PC-3 (cell line): ENCODE measurements at regions of chr1 and their contacts with region 1.

Region 1: GRCh38 chr1:1399187-1399871 is at the start of gene CCNL2:
- DNase-seq: peak; percentile 100
- ATAC-seq: peak; percentile 86
- H3K4me3 ChIP-seq: peak within 1 kb of the TSS; percentile 94
- H3K27ac ChIP-seq: peak within 1 kb of the TSS; percentile 58
- H3K4me1 ChIP-seq: peaks cover 29% of the 10 kb centered on the region
- H3K27me3 ChIP-seq: no peaks in the 10 kb centered on the region
- CTCF ChIP-seq: peak; percentile 54; the same call in 1 of the 2 replicates
- total RNA-seq, gene CCNL2: 356 and 385 TPM in 2 replicates

Region 2: DNA sequence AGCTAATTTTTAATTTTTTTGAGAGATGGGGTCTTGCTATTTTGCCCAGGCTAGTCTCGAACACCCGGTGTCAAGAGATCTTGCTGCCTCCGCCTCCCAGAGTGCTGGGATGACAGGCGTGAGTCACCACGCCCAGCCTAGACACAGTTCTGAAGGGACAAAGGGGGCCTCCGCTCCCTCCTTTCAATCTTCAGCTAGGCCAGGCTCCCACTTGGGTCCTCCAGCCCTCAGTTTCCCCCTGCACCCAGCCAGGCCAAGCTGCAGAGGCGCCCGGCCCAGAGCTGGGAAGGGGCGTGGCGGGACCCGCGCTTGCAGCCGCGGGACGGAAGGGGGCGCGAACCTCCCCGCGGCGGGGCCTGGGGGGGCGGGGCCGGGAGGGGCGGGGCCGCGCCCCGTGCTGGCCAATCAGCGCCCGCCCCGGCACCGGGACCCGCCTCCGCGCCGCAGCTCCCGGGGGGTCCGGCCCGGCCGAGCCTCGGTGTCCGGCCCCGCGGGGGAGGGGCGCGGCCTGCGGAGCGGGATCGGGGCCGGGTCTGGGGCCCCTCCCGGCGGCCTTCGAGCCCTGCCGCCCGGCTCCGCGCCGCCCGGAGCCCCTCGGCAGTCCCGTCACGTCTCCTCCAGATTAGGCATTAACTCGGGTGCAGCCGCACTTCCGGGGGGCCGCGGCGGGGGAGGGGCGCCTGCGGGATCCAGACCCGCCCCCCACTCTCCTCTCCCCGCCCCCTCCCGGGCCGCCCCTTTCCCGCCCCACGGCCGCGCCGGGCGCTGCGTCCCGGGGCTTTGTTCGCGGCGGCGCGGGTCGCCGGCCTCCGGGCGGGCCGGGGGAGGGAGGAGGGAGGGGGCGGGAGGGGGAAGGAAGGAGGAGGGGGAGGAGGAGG is 380.0 kb before region 1 on chr1:
- CTCF ChIA-PET with region 1: no interaction called
- POLR2A ChIA-PET with region 1: interaction called, 10 read pairs
- intact Hi-C with region 1: no loop called
- DNase-seq: peak; percentile 96
- ATAC-seq: peak; percentile 56
- H3K4me3 ChIP-seq: peak overlapping the region; percentile 37; the same call in 1 of the 2 replicates
- H3K27ac ChIP-seq: no peak overlapping the region
- H3K4me1 ChIP-seq: peaks cover 44% of the 10 kb centered on the region
- H3K27me3 ChIP-seq: no peaks in the 10 kb centered on the region
- CTCF ChIP-seq: peak; percentile 50

Region 3: GRCh38 chr1:1307908-1308755 is 91.2 kb before region 1 on chr1 and contains the starts of genes ACAP3 and PUSL1:
- CTCF ChIA-PET with region 1: no interaction called
- POLR2A ChIA-PET with region 1: no interaction called
- intact Hi-C with region 1: no loop called
- DNase-seq: peak; percentile 97
- ATAC-seq: peak; percentile 40
- H3K4me3 ChIP-seq: peak within 1 kb of the TSS; percentile 97
- H3K27ac ChIP-seq: peak within 1 kb of the TSS; percentile 78
- H3K4me1 ChIP-seq: peaks cover 33% of the 10 kb centered on the region
- H3K27me3 ChIP-seq: no peaks in the 10 kb centered on the region
- CTCF ChIP-seq: 0 out of 2 replicates have a peak, but pooled peaks have one; percentile 10
- total RNA-seq, gene ACAP3: 116 and 178 TPM in 2 replicates
- total RNA-seq, gene PUSL1: 132 and 142 TPM in 2 replicates

Region 4: GRCh38 chr1:1374929-1375662 is 24.2 kb before region 1 on chr1 and contains the start of gene AURKAIP1:
- CTCF ChIA-PET with region 1: interaction called, 4 read pairs
- POLR2A ChIA-PET with region 1: interaction called, 4 read pairs
- intact Hi-C with region 1: loop called (anchors 2 kb)
- DNase-seq: peak; percentile 100
- ATAC-seq: peak; percentile 92
- H3K4me3 ChIP-seq: peak within 1 kb of the TSS; percentile 96
- H3K27ac ChIP-seq: peak within 1 kb of the TSS; percentile 77
- H3K4me1 ChIP-seq: peaks cover 20% of the 10 kb centered on the region
- H3K27me3 ChIP-seq: no peaks in the 10 kb centered on the region
- CTCF ChIP-seq: 0 out of 2 replicates have a peak, but pooled peaks have one; percentile 28
- total RNA-seq, gene AURKAIP1: 823 and 1,067 TPM in 2 replicates

Region 5: DNA sequence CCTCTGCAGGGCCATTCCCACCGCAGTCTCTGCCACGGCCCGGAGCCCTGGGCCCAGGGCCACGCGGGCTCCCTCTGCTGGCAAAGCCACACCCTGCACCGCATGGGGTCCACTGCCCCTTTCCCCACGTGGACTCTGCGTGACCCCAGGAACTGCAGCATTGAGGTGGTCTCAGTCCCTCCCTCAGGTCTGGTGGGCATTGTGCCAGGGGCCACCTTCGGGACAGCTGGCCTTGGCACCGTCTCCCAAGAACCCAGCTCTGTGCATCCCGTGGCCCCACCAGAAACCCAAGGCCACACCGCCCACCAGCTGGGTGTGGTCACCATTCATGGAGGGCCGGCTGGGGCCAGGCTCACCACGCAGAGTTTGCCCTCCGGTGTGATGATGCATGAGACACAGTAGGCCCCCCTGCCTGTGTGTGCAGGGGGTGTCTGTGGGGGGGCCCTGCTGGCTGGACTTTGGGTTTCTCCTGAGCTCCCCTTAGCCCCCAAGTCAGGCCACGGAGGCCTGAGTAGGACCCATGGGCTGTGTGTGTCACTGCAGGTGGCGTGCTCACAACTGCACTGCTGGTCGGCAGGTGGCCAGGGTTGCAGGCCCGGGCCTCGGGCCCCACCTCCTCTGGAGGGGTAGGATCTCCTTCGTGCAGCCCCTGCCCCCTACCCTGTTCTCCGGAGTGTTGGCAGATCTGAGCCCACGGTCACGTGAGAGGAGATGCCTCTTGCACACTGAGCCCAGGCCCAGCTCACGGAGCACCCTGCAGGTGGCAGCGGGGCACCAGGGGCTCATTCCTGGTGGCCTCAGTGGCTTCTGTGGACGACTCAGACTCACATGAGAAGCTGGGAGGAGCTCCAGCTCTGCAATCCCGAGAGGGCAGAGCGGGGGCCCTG is 41.9 kb after region 1 on chr1:
- CTCF ChIA-PET with region 1: interaction called, 11 read pairs
- POLR2A ChIA-PET with region 1: no interaction called
- intact Hi-C with region 1: no loop called
- DNase-seq: peak; percentile 70
- ATAC-seq: peak; percentile 76
- H3K4me3 ChIP-seq: no peak overlapping the region
- H3K27ac ChIP-seq: no peak overlapping the region
- H3K4me1 ChIP-seq: peaks cover 6% of the 10 kb centered on the region
- H3K27me3 ChIP-seq: no peaks in the 10 kb centered on the region
- CTCF ChIP-seq: peak; percentile 94

Region 6: GRCh38 chr1:1528301-1529267 is 129.3 kb after region 1 on chr1:
- CTCF ChIA-PET with region 1: no interaction called
- POLR2A ChIA-PET with region 1: interaction called, 14 read pairs
- intact Hi-C with region 1: no loop called
- DNase-seq: no peak
- ATAC-seq: no peak
- H3K4me3 ChIP-seq: no peak overlapping the region
- H3K27ac ChIP-seq: no peak overlapping the region
- H3K4me1 ChIP-seq: no peaks in the 10 kb centered on the region
- H3K27me3 ChIP-seq: no peaks in the 10 kb centered on the region
- CTCF ChIP-seq: no peak